Dorsolateral prefrontal cortex (tissue), 120 donors: ENCODE measurements at regions of chr15 and their contacts with region 1.

Region 1: GRCh38 chr15:55649054-55649423 is 60.9 kb upstream of the PYGO1 start:
- DNase-seq: no peak
- H3K4me3 ChIP-seq: no peak overlapping the region
- H3K27ac ChIP-seq: no peak overlapping the region
- H3K27me3 ChIP-seq: no peaks in the 10 kb centered on the region
- CTCF ChIP-seq: no peak

Region 2: GRCh38 chr15:55526559-55527036 is 122.4 kb before region 1 on chr15:
- intact Hi-C with region 1: loop called in 1 of 2 experiments (anchors 5 kb)
- DNase-seq: no peak
- H3K4me3 ChIP-seq: no peak overlapping the region
- H3K27ac ChIP-seq: no peak overlapping the region
- H3K27me3 ChIP-seq: peaks cover 0 to 5% (median 0%) of the 10 kb centered on the region in 45 donors
- CTCF ChIP-seq: peak in 51 of 56 donors; percentile 4 to 73 (median 48)

Region 3: DNA sequence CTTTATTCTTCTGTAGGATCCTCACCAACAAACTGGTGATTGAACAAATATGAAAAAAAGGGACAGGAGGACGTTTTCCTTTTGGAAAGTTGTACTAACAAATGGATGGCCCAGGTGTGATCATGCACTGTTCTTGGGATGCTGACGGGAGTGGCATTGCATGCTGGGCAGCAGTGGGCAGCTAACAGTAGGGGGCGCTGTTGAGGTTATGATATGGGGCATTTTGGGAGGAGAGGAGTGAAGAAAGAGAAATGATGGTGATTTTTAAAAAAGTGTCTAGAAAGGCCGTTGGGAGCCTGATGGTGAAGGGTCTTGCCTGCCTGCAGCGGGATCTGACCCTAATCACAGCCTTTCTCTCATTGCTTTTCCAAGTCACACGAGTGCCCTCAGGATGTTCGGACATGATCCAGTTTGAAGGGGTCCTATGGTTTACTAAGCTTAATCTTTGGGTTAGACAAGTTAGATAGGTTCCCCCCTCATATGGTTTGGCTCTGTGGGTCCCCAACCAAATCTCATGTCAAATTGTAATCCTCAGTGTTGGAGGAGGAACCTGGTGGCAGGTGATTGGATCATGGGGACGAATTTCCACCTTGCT is 140.1 kb after region 1 on chr15:
- intact Hi-C with region 1: no loop called
- DNase-seq: no peak
- H3K4me3 ChIP-seq: no peak overlapping the region
- H3K27ac ChIP-seq: no peak overlapping the region
- H3K27me3 ChIP-seq: peaks cover 0 to 4% (median 0%) of the 10 kb centered on the region in 45 donors
- CTCF ChIP-seq: peak in 51 of 56 donors; percentile 13 to 59 (median 42)

Region 4: GRCh38 chr15:55829826-55830225 is 180.8 kb after region 1 on chr15:
- intact Hi-C with region 1: loop called in 1 of 2 experiments (anchors 5 kb)
- DNase-seq: no peak
- H3K4me3 ChIP-seq: no peak overlapping the region
- H3K27ac ChIP-seq: no peak overlapping the region
- H3K27me3 ChIP-seq: no peaks in the 10 kb centered on the region
- CTCF ChIP-seq: no peak

Region 5: DNA sequence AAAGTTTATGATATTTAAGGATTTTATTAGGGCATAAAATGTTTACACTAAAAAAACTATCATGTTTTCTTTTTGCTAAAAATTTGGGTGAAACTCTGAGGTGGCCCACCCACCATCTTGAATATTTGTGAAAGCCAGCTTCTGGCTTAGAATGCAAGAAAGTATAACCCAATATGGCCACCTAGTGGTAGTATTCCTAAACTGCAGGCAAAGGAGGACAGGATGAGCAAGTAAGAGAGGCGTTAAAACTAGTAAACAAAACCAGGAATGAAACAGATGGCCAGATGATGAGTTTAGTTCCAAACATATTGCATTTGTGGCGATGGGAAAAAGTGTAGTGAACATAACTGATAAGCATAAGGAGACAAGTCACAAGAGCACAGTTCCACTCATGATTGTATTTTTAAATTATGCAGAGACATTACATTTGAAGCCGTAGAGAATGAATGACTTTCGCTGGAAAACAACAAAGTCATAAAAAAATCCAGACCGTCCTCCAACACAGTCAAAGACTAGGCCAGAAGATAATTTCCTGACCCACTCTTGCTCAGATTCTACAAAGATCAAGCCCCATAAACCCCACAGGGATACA is 197.2 kb after region 1 on chr15:
- intact Hi-C with region 1: loop called (anchors 5 to 10 kb)
- DNase-seq: peak in 2 of 10 donors; percentile 5 to 17
- H3K4me3 ChIP-seq: no peak overlapping the region
- H3K27ac ChIP-seq: no peak overlapping the region
- H3K27me3 ChIP-seq: no peaks in the 10 kb centered on the region
- CTCF ChIP-seq: peak; percentile 75 to 95 (median 90)